Naive thymus-derived CD4-positive, alpha-beta T cell (primary cell): ENCODE measurements at regions of chr18 and their contacts with region 1.

Region 1: GRCh38 chr18:28189400-28190239 is 12.7 kb upstream of the CDH2 start:
- DNase-seq: no peak
- ATAC-seq: no peak
- H3K4me3 ChIP-seq: no peak overlapping the region
- H3K4me3 Mint-ChIP-seq: no peak overlapping the region
- H3K27ac ChIP-seq: no peak overlapping the region
- H3K27ac Mint-ChIP-seq: no peak overlapping the region
- H3K4me1 ChIP-seq: no peaks in the 10 kb centered on the region
- H3K4me1 Mint-ChIP-seq: no peaks in the 10 kb centered on the region
- H3K27me3 ChIP-seq: no peaks in the 10 kb centered on the region
- H3K27me3 Mint-ChIP-seq: peaks cover 0 to 5% (median 0%) of the 10 kb centered on the region in 5 donors

Region 2: DNA sequence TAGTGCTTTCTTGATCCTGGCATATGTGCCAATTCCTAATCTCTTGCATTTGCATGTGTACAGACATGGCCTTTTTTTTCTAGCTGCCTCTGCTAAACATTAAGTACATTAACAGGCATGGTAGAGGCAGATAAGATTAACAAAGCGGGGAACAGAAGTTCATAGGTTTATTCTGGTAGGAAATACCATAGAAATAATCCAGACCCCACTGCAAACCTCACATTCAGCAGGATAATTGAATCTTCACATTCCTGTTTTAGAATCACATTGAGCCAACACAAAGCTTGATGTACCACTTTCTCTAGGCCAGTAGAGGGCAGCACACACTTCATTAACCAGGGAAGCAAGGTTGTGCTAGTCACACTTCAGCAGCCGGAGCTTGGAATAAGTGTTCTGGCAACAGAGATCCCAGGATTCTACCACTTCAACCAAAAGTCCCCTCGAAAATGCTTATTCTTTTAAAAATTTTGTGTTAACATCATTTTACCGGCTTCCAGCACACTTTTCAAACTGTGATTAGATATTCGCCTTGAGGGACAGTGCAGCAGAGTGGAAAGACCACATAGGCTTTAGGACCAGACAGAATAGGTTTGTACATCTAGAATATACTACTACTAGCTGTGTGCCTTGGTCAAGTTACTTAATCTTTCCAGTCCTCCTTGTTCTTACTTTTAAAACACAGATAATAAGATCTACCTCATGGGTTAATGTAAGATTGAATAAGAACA is 584.3 kb before region 1 on chr18:
- CTCF ChIA-PET with region 1: no interaction called
- POLR2A ChIA-PET with region 1: no interaction called
- intact Hi-C with region 1: loop called in 1 of 2 experiments (anchors 1 kb)
- DNase-seq: peak in 1 of 9 donors; percentile 3
- ATAC-seq: peak; percentile 60
- H3K4me3 ChIP-seq: no peak overlapping the region
- H3K4me3 Mint-ChIP-seq: no peak overlapping the region
- H3K27ac ChIP-seq: no peak overlapping the region
- H3K27ac Mint-ChIP-seq: no peak overlapping the region
- H3K4me1 ChIP-seq: no peaks in the 10 kb centered on the region
- H3K4me1 Mint-ChIP-seq: no peaks in the 10 kb centered on the region
- H3K27me3 ChIP-seq: no peaks in the 10 kb centered on the region
- H3K27me3 Mint-ChIP-seq: no peaks in the 10 kb centered on the region

Region 3: DNA sequence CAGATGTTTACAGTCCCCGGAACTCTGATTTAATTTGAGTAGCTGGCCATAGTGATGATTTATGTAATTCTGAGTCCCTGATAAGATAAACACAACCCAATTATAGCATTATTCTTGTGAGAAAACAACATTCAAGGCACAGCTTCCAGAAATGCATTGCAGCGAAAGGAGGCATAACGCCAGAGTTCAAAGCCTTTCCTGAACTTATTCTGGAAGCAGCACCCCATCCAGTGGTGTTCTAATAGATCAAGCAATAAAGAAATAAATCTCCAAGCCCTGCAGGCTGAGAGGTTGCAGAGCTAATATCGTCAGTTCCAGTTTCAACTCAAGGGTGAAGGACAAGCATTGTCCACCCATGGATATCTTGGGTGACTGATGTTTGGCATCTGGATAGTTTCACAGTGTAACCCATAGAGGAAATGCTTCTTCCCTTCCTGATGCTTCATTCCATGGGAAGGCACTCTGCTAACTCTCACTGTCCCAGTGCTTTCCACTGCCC is 31.5 kb before region 1 on chr18:
- CTCF ChIA-PET with region 1: no interaction called
- POLR2A ChIA-PET with region 1: no interaction called
- intact Hi-C with region 1: no loop called
- DNase-seq: no peak
- ATAC-seq: no peak
- H3K4me3 ChIP-seq: no peak overlapping the region
- H3K4me3 Mint-ChIP-seq: no peak overlapping the region
- H3K27ac ChIP-seq: no peak overlapping the region
- H3K27ac Mint-ChIP-seq: no peak overlapping the region
- H3K4me1 ChIP-seq: no peaks in the 10 kb centered on the region
- H3K4me1 Mint-ChIP-seq: no peaks in the 10 kb centered on the region
- H3K27me3 ChIP-seq: no peaks in the 10 kb centered on the region
- H3K27me3 Mint-ChIP-seq: no peaks in the 10 kb centered on the region